ENCODE measurements at regions of chr6 and their contacts with region 1.

Region 1: DNA sequence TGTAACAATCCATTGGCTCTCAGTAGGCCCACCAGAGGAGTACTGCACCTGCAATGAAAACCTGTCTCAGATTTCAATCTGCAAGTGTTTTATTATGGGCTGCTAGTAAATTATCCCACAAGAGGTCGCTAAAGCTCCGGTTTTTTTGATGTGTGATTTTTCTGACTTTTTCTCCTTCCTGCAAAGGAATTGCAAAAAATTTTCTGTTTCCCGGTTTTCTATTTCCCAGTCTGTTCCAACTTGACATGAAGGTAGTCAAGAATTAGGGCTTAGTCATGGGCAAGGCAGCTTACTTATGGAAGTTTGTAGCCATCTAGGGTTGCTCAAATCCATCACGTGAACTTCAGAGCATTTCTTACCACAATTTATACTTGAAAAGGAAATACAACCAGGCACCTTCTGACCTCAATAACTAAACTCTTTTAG is 38.5 kb upstream of the AHI1 start:
- DNase-seq: no peak
- H3K4me3 Mint-ChIP-seq: no peak overlapping the region
- H3K27ac Mint-ChIP-seq: no peak overlapping the region
- H3K4me1 Mint-ChIP-seq: peaks cover 13% of the 10 kb centered on the region
- H3K27me3 Mint-ChIP-seq: no peaks in the 10 kb centered on the region

Region 2: GRCh38 chr6:135226537-135226936 is 309.5 kb before region 1 on chr6:
- CTCF ChIA-PET with region 1: no interaction called
- intact Hi-C with region 1: no loop called
- DNase-seq: no peak
- H3K4me3 Mint-ChIP-seq: no peak overlapping the region
- H3K27ac Mint-ChIP-seq: no peak overlapping the region
- H3K4me1 Mint-ChIP-seq: peaks cover 23% of the 10 kb centered on the region
- H3K27me3 Mint-ChIP-seq: no peaks in the 10 kb centered on the region

Region 3: GRCh38 chr6:135506270-135506997 is 29.6 kb before region 1 on chr6:
- CTCF ChIA-PET with region 1: no interaction called
- intact Hi-C with region 1: loop called (anchors 1 kb)
- DNase-seq: peak; percentile 12
- H3K4me3 Mint-ChIP-seq: no peak overlapping the region
- H3K27ac Mint-ChIP-seq: no peak overlapping the region
- H3K4me1 Mint-ChIP-seq: peaks cover 2% of the 10 kb centered on the region
- H3K27me3 Mint-ChIP-seq: no peaks in the 10 kb centered on the region

Region 4: GRCh38 chr6:135675862-135676261 is 139.9 kb after region 1 on chr6:
- CTCF ChIA-PET with region 1: interaction called, 8 read pairs
- intact Hi-C with region 1: loop called (anchors 1 kb)
- DNase-seq: peak; percentile 58
- H3K4me3 Mint-ChIP-seq: no peak overlapping the region
- H3K27ac Mint-ChIP-seq: no peak overlapping the region
- H3K4me1 Mint-ChIP-seq: peaks cover 10% of the 10 kb centered on the region
- H3K27me3 Mint-ChIP-seq: peaks cover 1% of the 10 kb centered on the region

Region 5: GRCh38 chr6:135909737-135910387 is 373.9 kb after region 1 on chr6:
- CTCF ChIA-PET with region 1: interaction called, 22 read pairs
- intact Hi-C with region 1: loop called (anchors 1 kb)
- DNase-seq: peak; percentile 80
- H3K4me3 Mint-ChIP-seq: no peak overlapping the region
- H3K27ac Mint-ChIP-seq: no peak overlapping the region
- H3K4me1 Mint-ChIP-seq: peaks cover 3% of the 10 kb centered on the region
- H3K27me3 Mint-ChIP-seq: no peaks in the 10 kb centered on the region

Region 6: GRCh38 chr6:136226027-136226673 is 690.1 kb after region 1 on chr6:
- CTCF ChIA-PET with region 1: interaction called, 24 read pairs
- intact Hi-C with region 1: loop called (anchors 1 kb)
- DNase-seq: peak; percentile 66
- H3K4me3 Mint-ChIP-seq: no peak overlapping the region
- H3K27ac Mint-ChIP-seq: no peak overlapping the region
- H3K4me1 Mint-ChIP-seq: peaks cover 7% of the 10 kb centered on the region
- H3K27me3 Mint-ChIP-seq: no peaks in the 10 kb centered on the region

Measured in activated naive CD4-positive, alpha-beta T cell treated with anti-CD3 and anti-CD28 coated beads for 36 hours (primary cell).